ENCODE measurements at regions of chr22 and their contacts with region 1.

Region 1: DNA sequence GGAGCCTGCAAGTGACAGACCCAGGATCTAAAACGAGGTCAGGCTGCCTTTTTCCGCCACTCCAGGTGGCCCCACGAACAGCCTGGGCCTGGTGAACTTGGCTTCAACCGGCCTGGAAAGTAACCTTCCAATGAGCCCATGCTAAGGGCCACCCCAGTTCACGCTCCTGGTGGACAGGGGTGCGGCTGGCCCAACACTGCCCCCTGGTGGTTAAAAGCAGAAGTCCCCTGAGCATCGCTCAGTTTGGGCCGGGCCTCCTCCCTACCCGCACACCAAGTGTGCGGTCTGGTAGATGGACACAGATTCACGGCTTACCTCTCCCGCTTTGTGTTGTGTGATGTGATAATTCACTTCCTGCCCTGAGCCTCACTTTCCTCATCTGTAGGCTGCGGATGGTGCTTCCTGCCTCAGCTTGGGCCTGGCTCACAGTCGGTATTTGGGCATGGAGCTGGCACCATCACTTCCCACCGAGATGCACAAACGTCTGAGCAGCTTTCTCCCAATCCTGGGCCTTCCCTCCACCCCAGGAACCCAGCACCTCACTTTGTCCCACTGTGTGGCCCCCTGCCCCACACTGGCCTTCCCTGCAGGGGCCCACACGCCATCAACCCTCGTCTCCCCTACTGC is 13.7 kb upstream of the SEC14L3 start:
- DNase-seq: peak; percentile 68
- H3K4me3 ChIP-seq: no peak overlapping the region
- H3K27ac ChIP-seq: no peak overlapping the region
- H3K4me1 ChIP-seq: no peaks in the 10 kb centered on the region
- H3K27me3 ChIP-seq: no peaks in the 10 kb centered on the region
- CTCF ChIP-seq: peak; percentile 99

Region 2: DNA sequence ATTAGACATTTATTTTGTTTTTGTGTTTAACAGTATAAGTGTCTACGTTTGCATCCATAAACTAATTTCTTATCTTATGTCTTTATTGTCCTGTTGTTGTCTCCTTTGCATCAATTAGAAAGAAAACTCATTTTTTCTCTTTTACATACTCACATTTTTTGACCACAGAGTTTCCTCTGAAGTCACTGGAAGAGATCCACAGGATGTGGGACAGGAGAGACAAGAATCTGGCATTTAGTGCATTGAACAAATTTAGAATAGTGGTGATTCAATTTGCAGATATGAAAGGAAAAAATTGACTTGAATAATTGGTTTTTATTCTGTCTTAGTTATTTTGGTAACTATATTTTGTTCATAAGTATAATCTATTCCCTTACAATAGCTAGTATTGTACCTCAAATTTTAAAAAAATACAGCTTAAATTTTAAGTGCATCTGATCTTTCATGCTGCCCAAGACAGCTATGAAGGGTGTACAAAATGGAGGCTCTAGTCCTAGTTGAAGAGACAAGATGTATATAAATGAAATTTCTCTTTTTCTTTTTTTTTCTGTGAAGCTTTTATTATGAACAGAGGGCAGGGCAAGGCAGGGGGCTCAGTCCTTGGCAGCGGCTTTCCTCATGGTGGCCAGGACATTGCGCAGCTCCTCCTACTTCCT is 380.8 kb before region 1 on chr22:
- intact Hi-C with region 1: loop called (anchors 10 kb)
- DNase-seq: no peak
- H3K4me3 ChIP-seq: no peak overlapping the region
- H3K27ac ChIP-seq: no peak overlapping the region
- H3K4me1 ChIP-seq: no peaks in the 10 kb centered on the region
- H3K27me3 ChIP-seq: no peaks in the 10 kb centered on the region
- CTCF ChIP-seq: no peak

Region 3: GRCh38 chr22:30183861-30184278 is 301.6 kb before region 1 on chr22:
- intact Hi-C with region 1: no loop called
- DNase-seq: no peak
- H3K4me3 ChIP-seq: no peak overlapping the region
- H3K27ac ChIP-seq: no peak overlapping the region
- H3K4me1 ChIP-seq: no peaks in the 10 kb centered on the region
- H3K27me3 ChIP-seq: no peaks in the 10 kb centered on the region
- CTCF ChIP-seq: no peak

Region 4: DNA sequence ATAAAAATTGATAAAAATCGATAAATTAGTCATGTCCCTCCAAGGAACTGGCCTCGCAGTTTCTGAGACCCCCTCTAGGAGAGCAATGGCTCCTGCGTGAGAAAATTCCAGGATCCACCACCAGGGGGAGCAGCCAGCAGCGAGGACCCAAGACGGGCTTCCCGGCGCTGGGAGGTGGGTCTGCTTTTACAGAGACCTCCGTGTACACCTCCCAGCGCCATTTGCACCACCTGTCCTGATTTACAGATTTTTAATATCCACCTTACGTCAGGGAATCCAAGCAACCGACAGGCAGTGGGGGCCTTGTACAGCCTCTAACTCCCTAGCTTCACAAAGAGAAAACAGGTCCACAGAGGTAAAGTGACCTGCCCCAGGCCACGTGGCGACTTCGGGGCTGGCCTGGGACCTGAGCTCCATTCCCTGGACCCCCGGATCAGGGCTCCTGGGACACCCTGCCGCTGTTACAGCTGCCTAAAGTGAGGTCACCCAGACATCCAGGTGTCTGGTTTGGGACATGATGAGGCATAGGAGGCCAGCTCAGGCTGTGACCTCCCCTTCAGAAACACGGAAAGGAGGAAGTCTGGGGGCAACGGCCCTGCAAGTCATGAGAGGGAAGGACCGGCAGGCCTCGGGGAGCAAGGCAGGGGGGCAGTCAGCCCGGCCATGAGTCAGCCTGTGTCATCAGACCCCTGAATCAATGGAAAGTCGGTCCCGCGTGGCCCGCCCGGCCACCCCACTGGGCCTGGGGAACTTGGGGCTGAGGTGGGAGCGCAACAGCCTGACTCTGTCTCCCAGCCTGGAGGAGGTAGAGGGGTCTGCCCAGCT is 222.3 kb before region 1 on chr22:
- intact Hi-C with region 1: loop called (anchors 10 kb)
- DNase-seq: peak; percentile 85
- H3K4me3 ChIP-seq: no peak overlapping the region
- H3K27ac ChIP-seq: no peak overlapping the region
- H3K4me1 ChIP-seq: no peaks in the 10 kb centered on the region
- H3K27me3 ChIP-seq: no peaks in the 10 kb centered on the region
- CTCF ChIP-seq: peak; percentile 99

Region 5: GRCh38 chr22:30444632-30445437 is 40.6 kb before region 1 on chr22:
- intact Hi-C with region 1: loop called (anchors 5 kb)
- DNase-seq: peak; percentile 49
- H3K4me3 ChIP-seq: no peak overlapping the region
- H3K27ac ChIP-seq: no peak overlapping the region
- H3K4me1 ChIP-seq: no peaks in the 10 kb centered on the region
- H3K27me3 ChIP-seq: no peaks in the 10 kb centered on the region
- CTCF ChIP-seq: peak; percentile 62

Region 6: GRCh38 chr22:30947816-30948454 is 462.5 kb after region 1 on chr22:
- intact Hi-C with region 1: no loop called
- DNase-seq: no peak
- H3K4me3 ChIP-seq: no peak overlapping the region
- H3K27ac ChIP-seq: no peak overlapping the region
- H3K4me1 ChIP-seq: no peaks in the 10 kb centered on the region
- H3K27me3 ChIP-seq: no peaks in the 10 kb centered on the region
- CTCF ChIP-seq: peak; percentile 36